Aorta (tissue), 5 donors: ENCODE measurements at regions of chr11 and their contacts with region 1.

Region 1: GRCh38 chr11:17077520-17078401 is at the start of gene RPS13:
- DNase-seq: peak; percentile 98
- ATAC-seq: peak; percentile 99
- H3K4me3 ChIP-seq: peak within 1 kb of the TSS; percentile 73 to 84
- H3K27ac ChIP-seq: peak within 1 kb of the TSS; percentile 37 to 55
- H3K4me1 ChIP-seq: peaks cover 0 to 3% of the 10 kb centered on the region in 2 donors
- H3K27me3 ChIP-seq: no peaks in the 10 kb centered on the region
- total RNA-seq, gene RPS13: 699 to 761 TPM

Region 2: GRCh38 chr11:16791191-16791961 is 286.4 kb before region 1 on chr11:
- intact Hi-C with region 1: loop called in 1 of 2 experiments (anchors 5 kb)
- DNase-seq: peak; percentile 80 to 84
- ATAC-seq: peak; percentile 80
- H3K4me3 ChIP-seq: no peak overlapping the region
- H3K27ac ChIP-seq: peak overlapping the region in 1 of 2 donors; percentile 88
- H3K4me1 ChIP-seq: peaks cover 0 to 5% of the 10 kb centered on the region in 2 donors
- H3K27me3 ChIP-seq: no peaks in the 10 kb centered on the region

Region 3: DNA sequence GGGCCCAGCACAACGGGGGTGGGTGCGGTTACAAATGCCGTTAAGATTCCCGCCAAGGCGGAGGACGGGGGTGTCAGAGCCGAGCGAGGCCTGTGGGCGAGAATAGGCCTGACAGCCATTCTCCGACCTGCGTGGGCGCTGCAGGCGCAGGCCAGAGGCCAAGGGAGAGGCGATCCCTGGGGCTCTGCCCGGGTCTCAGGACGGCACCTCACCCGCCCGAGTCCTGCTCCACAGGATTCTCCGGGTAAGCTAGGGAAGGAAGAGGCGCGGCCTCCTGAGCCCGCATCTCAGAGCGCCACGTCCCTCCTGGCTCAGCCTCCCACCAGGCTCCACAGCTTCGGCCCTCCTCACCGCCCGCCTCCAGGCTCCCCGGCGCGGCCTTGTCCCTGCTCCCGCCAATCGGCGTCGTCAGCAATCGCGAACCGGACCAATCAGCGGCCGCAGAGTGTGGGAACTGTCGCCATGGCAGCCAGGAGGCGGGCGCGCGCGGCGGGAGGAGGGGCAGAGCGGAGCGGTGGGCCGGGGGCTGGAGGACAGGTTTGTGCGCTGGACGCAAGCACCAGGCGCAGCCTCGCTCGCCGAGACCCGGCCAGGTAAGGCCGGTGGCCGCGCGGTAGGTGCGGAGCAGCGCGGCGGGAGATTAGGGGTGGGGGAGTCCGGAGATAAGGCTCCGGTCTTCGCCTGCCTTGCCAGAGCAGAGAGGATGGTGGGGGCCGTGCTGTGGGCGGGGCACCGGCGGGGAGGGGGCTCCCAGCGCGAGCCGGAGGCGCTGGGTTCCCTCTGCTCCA is 198.7 kb after region 1 on chr11 and contains the start of gene NUCB2:
- intact Hi-C with region 1: loop called (anchors 5 to 10 kb)
- DNase-seq: peak; percentile 98 to 99
- ATAC-seq: peak; percentile 100
- H3K4me3 ChIP-seq: peak within 1 kb of the TSS; percentile 61 to 78
- H3K27ac ChIP-seq: peak within 1 kb of the TSS; percentile 62 to 92
- H3K4me1 ChIP-seq: no peaks in the 10 kb centered on the region
- H3K27me3 ChIP-seq: no peaks in the 10 kb centered on the region
- total RNA-seq, gene NUCB2: 108 to 130 TPM